Heart left ventricle (tissue), 16 donors: ENCODE measurements at regions of chr6 and their contacts with region 1.

Region 1: DNA sequence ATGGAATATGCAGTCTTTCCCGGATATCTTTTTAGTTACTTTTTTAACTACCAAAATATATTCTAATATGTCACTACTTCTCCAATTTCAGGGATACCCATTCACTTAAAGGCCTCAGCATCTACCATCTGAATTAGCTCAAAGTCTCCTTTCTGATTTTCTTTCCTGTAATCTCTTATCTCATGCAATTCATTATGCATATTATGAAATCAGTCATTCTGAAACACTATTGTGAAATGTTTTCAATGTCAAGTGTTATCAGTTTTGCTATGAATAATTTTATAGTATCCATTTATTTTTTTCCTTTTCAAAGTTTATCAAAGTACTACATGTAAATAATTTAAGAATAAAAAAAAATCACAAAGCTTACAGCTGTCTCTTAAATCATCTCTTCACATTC is 41.2 kb upstream of the TPBG start:
- DNase-seq: no peak
- ATAC-seq: no peak
- H3K4me3 ChIP-seq: no peak overlapping the region
- H3K27ac ChIP-seq: no peak overlapping the region
- H3K4me1 ChIP-seq: no peaks in the 10 kb centered on the region
- H3K27me3 ChIP-seq: no peaks in the 10 kb centered on the region
- CTCF ChIP-seq: no peak
- POLR2A ChIP-seq: no peak

Region 2: DNA sequence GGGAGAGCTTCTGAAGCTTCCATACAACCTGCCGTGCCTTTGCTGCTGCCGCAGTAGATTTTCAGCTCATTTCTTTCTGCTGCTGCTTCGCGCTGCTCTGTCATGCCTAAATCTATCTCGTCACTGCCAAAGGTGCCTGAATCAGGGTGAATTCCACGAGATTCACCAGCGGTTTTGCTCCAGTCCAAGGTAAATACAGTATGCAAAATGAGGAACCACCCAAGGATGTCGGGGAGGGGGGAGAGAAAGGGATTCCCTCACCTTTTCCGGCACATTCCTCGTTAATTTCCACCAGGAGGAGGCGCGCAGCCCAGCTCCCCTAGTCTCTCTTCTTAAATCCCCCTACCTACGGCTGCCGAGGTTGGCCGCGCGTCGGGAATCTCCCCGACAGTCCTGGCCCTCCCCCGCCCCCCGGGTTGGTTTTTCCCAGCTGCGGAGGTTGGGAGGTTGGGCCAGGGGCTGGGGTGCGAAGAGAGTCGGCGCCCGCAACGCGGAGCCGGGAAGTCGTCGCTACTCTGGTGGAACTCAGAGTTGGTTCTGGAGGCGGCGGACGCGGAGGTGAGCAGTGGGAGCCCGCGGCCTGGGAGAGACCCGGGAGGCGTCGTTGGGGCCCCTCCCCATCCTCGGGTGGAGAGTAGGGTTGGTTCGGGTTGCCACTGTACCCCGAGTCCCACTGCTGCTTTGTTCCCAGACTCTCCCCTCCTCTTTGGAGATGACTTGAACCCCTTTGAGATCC is 41.1 kb after region 1 on chr6 and contains the start of gene TPBG:
- intact Hi-C with region 1: loop called in 1 of 10 experiments (anchors 2 kb)
- DNase-seq: peak; percentile 44 to 70 (median 45)
- ATAC-seq: peak; percentile 74 to 84 (median 78)
- H3K4me3 ChIP-seq: peak within 1 kb of the TSS; percentile 35 to 76 (median 64)
- H3K27ac ChIP-seq: peak within 1 kb of the TSS in 11 of 12 donors; percentile 35 to 80 (median 75)
- H3K4me1 ChIP-seq: peaks cover 0 to 25% (median 6%) of the 10 kb centered on the region in 12 donors
- H3K27me3 ChIP-seq: peaks cover 0 to 63% (median 17%) of the 10 kb centered on the region in 9 donors
- CTCF ChIP-seq: peak in 4 of 12 donors; percentile 10 to 29 (median 22)
- POLR2A ChIP-seq: no peak
- total RNA-seq, gene TPBG: 1.4 to 10.0 (median 2.8) TPM